Cardiac septum (tissue), 1 donor: ENCODE measurements at regions of chr5 and their contacts with region 1.

Region 1: GRCh38 chr5:110757118-110757729 is 18.4 kb downstream of the SLC25A46 start:
- DNase-seq: no peak

Region 2: DNA sequence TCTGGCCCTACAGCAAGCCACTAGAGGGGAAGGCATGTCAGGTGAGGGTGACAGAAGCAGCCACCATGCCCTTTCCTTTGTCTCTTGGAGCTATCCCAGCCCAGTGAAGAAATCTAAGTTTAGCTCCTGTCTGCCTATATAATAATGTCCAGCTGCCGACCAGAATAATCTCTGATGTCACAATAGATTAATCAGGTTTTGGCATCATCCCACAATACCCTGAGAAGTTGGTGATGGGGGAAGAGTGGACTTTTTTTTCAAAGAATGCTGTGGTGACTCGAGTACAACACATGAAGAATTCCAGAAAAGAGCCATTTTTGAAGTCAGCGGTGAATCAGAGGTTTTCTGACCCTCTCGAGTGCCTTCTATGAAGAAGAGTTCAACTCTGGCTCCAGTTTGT is 312.6 kb after region 1 on chr5:
- intact Hi-C with region 1: loop called (anchors 5 kb)
- DNase-seq: no peak

Region 3: GRCh38 chr5:111242606-111243005 is 485.4 kb after region 1 on chr5:
- intact Hi-C with region 1: no loop called
- DNase-seq: no peak